Posterior vena cava (tissue), 2 donors: ENCODE measurements at regions of chr17 and their contacts with region 1.

Region 1: DNA sequence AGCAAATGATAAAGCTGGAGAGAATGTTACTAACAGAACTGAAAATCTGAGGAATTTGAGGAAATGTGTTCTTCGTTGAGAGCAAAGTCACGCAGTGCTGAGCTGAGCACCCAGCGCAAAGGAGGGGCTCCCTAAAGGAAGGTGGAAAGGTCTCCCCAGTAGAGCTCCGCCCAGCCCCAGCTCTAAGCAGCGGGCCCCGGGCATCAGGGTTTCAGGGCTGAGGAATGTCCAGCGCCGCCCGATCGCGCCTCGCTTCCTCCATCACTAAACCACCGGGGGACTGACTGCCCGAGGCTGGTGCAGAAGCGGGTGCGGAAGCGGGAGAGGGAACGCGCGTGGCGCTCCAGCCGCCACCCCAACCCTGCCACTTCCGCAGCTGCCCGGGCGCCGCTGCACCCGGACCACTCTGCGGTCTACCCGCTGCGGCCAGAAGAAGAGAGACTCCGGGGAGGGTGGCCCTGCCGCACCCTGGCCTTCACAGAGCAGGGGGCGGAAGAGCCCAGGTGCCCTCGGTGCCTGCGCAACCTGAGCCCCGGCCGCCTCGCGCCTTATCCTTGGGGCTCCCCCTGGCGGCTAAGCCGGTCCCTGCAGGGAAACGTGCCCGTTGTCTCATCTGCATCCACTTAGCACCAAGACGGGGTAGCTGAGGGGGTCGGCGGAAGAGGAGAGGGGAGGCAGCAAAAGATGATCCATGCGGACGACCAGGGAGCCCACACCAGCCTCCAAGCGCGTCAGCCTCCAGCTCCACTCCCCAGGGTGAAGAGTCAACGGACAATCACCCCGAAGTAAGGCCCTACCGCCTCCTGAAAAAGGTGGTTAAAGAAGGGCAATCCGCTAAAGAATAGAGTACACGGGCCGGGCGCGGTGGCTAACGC is 12.4 kb upstream of the GUCY2D start:
- DNase-seq: peak; percentile 95

Region 2: GRCh38 chr17:7729816-7730215 is 260.2 kb before region 1 on chr17:
- intact Hi-C with region 1: loop called in 1 of 2 experiments (anchors 10 kb)
- DNase-seq: no peak

Region 3: GRCh38 chr17:7825206-7825990 is 164.6 kb before region 1 on chr17:
- intact Hi-C with region 1: loop called in 1 of 2 experiments (anchors 10 kb)
- DNase-seq: no peak

Region 4: DNA sequence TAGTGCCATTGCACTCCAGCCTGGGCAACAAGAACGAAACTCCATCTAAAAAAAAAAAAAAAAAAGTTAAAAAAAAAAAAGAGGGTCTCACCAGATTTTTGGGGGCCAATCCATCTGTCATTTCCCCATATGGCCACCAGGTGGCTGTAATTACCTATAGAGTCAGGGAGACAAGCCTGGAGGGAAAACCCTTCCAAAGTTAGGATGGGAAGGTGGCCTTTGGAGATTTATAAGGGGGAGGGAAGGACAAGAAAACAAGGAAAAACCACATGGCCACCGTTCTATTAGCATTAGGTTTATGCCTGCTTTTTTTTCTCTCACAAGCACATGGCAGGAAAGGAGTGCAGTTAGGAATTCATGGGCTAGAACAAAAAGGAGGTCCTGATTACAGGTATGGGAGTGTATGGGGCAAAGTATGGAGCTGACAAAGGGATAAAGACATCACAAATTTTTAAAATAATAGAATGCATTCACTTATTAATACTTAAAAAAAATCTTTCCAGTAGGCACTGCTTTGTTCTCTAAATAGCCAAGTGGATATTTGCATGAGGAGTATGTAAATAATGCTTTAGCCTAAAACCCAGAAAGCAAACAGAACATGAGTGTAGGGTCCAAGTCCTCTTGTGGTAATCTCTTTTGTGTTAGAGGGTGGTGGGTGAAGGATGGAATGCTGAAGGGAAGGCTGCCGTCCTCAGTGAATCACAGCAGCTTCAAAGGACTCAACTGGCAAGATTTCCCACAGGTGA is 127.2 kb before region 1 on chr17:
- intact Hi-C with region 1: loop called (anchors 5 kb)
- DNase-seq: no peak

Region 5: GRCh38 chr17:7912927-7913524 is 77.0 kb before region 1 on chr17:
- intact Hi-C with region 1: loop called in 1 of 2 experiments (anchors 5 kb)
- DNase-seq: no peak